Body of pancreas (tissue), 4 donors: ENCODE measurements at regions of chr18 and their contacts with region 1.

Region 1: GRCh38 chr18:13166023-13166422 is 52.5 kb upstream of the LDLRAD4 start:
- DNase-seq: no peak
- ATAC-seq: no peak
- H3K4me3 ChIP-seq: no peak overlapping the region
- H3K27ac ChIP-seq: no peak overlapping the region
- H3K4me1 ChIP-seq: no peaks in the 10 kb centered on the region
- H3K27me3 ChIP-seq: no peaks in the 10 kb centered on the region
- CTCF ChIP-seq: no peak
- POLR2A ChIP-seq: no peak

Region 2: GRCh38 chr18:12737243-12737902 is 428.6 kb before region 1 on chr18:
- intact Hi-C with region 1: loop called (anchors 10 kb)
- DNase-seq: no peak
- ATAC-seq: no peak
- H3K4me3 ChIP-seq: no peak overlapping the region
- H3K27ac ChIP-seq: no peak overlapping the region
- H3K4me1 ChIP-seq: no peaks in the 10 kb centered on the region
- H3K27me3 ChIP-seq: no peaks in the 10 kb centered on the region
- CTCF ChIP-seq: no peak
- POLR2A ChIP-seq: no peak

Region 3: GRCh38 chr18:13425462-13426133 is 259.6 kb after region 1 on chr18:
- intact Hi-C with region 1: no loop called
- DNase-seq: no peak
- ATAC-seq: no peak
- H3K4me3 ChIP-seq: no peak overlapping the region
- H3K27ac ChIP-seq: no peak overlapping the region
- H3K4me1 ChIP-seq: no peaks in the 10 kb centered on the region
- H3K27me3 ChIP-seq: no peaks in the 10 kb centered on the region
- CTCF ChIP-seq: no peak
- POLR2A ChIP-seq: no peak